Activated CD4-positive, alpha-beta T cell treated with anti-CD3 and anti-CD28 coated beads, Interleukin-2, amount 10 ng/mL, durations not matched to agents 7 days and 5 days (primary cell): ENCODE measurements at regions of chr22 and their contacts with region 1.

Region 1: DNA sequence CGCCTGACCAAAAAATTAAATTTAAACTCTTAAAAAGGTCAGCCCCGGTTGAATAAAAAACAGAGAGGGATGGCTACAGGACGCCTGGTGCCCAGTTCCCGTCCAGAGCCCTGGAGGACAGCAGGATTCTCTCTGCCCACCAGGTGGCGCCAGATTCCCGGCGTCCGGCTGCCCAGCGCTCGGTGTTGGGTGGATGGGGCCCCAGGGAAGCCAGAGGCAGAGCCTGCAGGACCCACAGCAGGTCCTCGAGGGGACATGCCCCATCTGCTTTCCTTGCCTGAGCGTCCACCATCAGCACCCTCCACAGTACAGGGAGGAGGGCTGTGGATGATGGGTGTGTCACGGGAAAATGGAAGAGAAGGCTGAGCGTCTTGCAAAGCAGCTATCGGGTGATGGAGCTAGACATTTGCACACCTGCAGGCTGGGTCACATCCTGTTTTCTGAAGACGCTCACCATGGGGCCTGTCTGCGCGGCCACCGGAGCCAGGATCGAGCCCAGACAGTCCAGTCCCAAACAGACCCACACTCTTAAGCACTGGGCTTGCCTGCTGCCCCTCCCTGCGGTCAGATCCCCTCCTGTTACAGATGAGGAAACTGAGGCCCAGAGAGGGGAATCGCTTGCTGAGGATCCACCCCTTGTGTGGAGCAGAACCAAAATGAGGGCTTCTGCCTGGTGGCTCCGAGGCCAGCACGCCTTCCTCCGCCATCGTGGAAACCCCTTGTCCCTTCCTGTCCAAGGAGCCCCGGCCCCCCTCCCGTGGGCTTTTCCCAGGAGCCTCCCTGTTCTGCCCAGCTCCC is 18.5 kb upstream of the CBX7 start:
- DNase-seq: peak; percentile 82
- H3K4me3 Mint-ChIP-seq: peak overlapping the region; percentile 62
- H3K27ac Mint-ChIP-seq: peak overlapping the region; percentile 82
- H3K4me1 Mint-ChIP-seq: peaks cover 56% of the 10 kb centered on the region
- H3K27me3 Mint-ChIP-seq: peaks cover 2% of the 10 kb centered on the region

Region 2: GRCh38 chr22:39306581-39307361 is 135.7 kb after region 1 on chr22:
- CTCF ChIA-PET with region 1: interaction called, 18 read pairs
- POLR2A ChIA-PET with region 1: no interaction called
- DNase-seq: peak; percentile 64
- H3K4me3 Mint-ChIP-seq: no peak overlapping the region
- H3K27ac Mint-ChIP-seq: no peak overlapping the region
- H3K4me1 Mint-ChIP-seq: peaks cover 17% of the 10 kb centered on the region
- H3K27me3 Mint-ChIP-seq: no peaks in the 10 kb centered on the region